Panc1 (cell line): ENCODE measurements at regions of chr10 and their contacts with region 1.

Region 1: DNA sequence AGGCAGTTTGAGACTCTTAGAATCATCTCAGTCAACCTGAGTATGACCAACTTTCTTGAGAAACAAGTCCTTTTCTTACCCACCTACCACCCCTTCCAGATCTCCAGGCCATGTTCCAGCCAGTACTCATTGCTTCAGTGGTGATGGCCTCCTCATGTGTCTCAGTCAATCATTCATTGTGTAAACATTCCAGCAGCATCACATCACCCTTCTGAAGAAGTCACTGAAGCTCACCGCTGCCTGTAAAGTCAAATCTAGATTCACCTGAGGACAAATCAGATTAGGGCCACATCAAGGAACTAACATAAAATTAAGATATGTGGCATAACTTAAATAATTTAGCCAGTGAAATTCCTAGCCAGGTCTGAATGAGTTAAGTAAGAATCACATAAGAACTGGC is 467.3 kb upstream of the NRP1 start:
- DNase-seq: peak; percentile 22
- ATAC-seq: no peak
- H3K4me3 ChIP-seq: no peak overlapping the region
- H3K27ac ChIP-seq: no peak overlapping the region
- H3K4me1 ChIP-seq: no peaks in the 10 kb centered on the region
- H3K27me3 ChIP-seq: no peaks in the 10 kb centered on the region
- CTCF ChIP-seq: no peak

Region 2: DNA sequence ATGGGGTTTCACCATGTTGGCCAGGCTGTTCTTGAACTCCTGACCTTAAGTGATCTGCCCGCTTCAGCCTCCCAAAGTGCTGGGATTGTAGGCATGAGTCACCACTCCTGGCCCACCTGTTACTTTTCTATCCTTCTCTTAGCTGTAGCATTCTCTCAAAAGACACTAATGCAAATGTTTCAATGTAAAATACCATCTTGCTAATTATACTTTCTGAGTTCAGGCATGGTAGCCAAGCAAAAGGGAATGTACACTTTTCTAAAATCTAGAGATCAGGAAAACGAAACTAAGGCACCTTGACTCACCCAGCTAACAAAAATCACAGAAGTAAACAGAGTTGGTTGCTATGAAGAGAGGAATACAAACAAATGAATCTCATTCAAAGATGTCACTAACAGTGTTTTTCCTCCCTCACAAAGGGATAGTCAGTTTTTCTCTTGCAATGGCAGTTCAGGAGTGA is 66.3 kb before region 1 on chr10:
- CTCF ChIA-PET with region 1: interaction called, 10 read pairs
- POLR2A ChIA-PET with region 1: no interaction called
- in situ Hi-C with region 1: no loop called
- intact Hi-C with region 1: no loop called
- DNase-seq: no peak
- ATAC-seq: no peak
- H3K4me3 ChIP-seq: no peak overlapping the region
- H3K27ac ChIP-seq: no peak overlapping the region
- H3K4me1 ChIP-seq: no peaks in the 10 kb centered on the region
- H3K27me3 ChIP-seq: no peaks in the 10 kb centered on the region
- CTCF ChIP-seq: no peak

Region 3: DNA sequence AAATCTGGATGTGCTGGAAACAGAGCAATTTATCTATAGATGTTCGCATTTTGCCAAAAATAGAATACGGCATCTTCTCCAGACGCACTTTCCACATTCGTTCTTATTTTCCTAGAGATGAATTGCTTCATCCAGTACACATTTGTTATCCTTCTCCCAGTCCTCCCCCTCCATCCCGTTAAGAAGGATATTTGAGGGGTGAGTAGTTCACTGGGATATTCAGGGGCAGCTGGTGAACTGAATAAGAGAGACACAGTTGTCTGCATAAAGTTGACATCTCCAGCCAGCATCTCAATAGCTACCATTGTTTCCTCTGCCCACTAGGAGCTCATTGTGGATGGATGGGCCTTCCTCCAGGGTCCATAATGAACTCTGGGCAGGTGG is 10.5 kb before region 1 on chr10:
- CTCF ChIA-PET with region 1: no interaction called
- POLR2A ChIA-PET with region 1: no interaction called
- in situ Hi-C with region 1: no loop called
- intact Hi-C with region 1: no loop called
- DNase-seq: no peak
- ATAC-seq: no peak
- H3K4me3 ChIP-seq: no peak overlapping the region
- H3K27ac ChIP-seq: no peak overlapping the region
- H3K4me1 ChIP-seq: no peaks in the 10 kb centered on the region
- H3K27me3 ChIP-seq: no peaks in the 10 kb centered on the region
- CTCF ChIP-seq: no peak

Region 4: DNA sequence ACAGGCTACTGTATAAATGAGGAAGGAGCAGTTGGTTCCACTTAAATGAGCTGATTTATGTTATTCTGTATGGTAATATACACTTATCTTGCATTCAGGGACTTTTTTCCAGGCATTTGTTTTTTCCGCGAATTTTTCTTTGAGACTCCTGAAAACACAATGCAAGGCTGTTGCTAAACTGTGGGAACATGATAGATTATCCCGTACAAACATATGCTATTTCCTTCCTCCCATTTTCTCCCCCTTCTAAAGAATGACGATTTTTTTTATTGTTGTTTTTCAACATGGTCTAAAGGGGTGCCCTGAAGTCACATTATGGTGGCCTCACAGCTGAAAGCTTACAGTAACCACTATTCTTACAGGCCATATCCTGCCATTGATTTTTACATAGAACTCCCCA is 56.6 kb after region 1 on chr10:
- CTCF ChIA-PET with region 1: no interaction called
- POLR2A ChIA-PET with region 1: no interaction called
- in situ Hi-C with region 1: no loop called
- intact Hi-C with region 1: no loop called
- DNase-seq: no peak
- ATAC-seq: no peak
- H3K4me3 ChIP-seq: no peak overlapping the region
- H3K27ac ChIP-seq: no peak overlapping the region
- H3K4me1 ChIP-seq: no peaks in the 10 kb centered on the region
- H3K27me3 ChIP-seq: no peaks in the 10 kb centered on the region
- CTCF ChIP-seq: no peak

Region 5: GRCh38 chr10:33927347-33927746 is 125.6 kb after region 1 on chr10:
- CTCF ChIA-PET with region 1: no interaction called
- POLR2A ChIA-PET with region 1: no interaction called
- in situ Hi-C with region 1: no loop called
- intact Hi-C with region 1: no loop called
- DNase-seq: no peak
- ATAC-seq: no peak
- H3K4me3 ChIP-seq: no peak overlapping the region
- H3K27ac ChIP-seq: no peak overlapping the region
- H3K4me1 ChIP-seq: no peaks in the 10 kb centered on the region
- H3K27me3 ChIP-seq: no peaks in the 10 kb centered on the region
- CTCF ChIP-seq: no peak